ENCODE measurements at regions of chr9 and their contacts with region 1.

Region 1: DNA sequence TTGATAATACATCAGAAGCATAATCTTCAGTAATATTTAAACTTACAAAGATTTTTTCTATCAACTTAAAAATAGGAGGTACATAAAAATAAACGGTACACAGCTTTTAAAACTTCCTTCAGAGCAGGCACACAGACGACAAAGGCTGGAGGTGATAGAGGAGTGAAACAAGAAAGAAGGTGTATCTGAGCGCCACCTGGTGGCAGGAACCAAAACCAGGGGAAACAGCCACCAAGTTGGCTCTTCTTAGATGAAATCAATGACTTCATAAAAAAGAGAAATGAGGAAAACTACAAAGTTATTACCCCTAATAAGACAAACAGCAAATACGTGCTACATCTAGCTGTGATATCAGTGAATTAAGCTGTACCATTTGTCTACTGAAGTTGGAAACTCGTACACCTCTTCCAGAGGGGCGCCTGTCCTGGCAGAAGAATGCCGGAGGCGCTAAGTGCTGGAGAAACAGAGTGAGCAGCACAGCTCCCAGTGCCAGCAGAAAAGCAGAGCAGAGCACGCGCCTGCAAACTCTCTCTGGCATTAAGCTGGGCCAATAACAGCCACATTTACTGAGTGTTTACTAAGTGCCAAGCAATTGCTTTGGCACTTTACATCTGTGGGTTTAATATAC is 85.9 kb downstream of the SETX start:
- DNase-seq: no peak
- H3K4me3 ChIP-seq: no peak overlapping the region
- H3K27ac ChIP-seq: no peak overlapping the region
- H3K4me1 ChIP-seq: no peaks in the 10 kb centered on the region
- H3K27me3 ChIP-seq: no peaks in the 10 kb centered on the region
- CTCF ChIP-seq: peak; percentile 20 to 76 (median 43)
- POLR2A ChIP-seq: no peak

Region 2: GRCh38 chr9:131762356-131762932 is 506.4 kb before region 1 on chr9:
- intact Hi-C with region 1: loop called (anchors 5 kb)
- DNase-seq: no peak
- H3K4me3 ChIP-seq: peak overlapping the region in 1 of 2 donors; percentile 13
- H3K27ac ChIP-seq: no peak overlapping the region
- H3K4me1 ChIP-seq: peaks cover 7% of the 10 kb centered on the region
- H3K27me3 ChIP-seq: no peaks in the 10 kb centered on the region
- CTCF ChIP-seq: peak; percentile 91 to 98 (median 91)
- POLR2A ChIP-seq: no peak